ENCODE measurements at regions of chr1 and their contacts with region 1.

Region 1: DNA sequence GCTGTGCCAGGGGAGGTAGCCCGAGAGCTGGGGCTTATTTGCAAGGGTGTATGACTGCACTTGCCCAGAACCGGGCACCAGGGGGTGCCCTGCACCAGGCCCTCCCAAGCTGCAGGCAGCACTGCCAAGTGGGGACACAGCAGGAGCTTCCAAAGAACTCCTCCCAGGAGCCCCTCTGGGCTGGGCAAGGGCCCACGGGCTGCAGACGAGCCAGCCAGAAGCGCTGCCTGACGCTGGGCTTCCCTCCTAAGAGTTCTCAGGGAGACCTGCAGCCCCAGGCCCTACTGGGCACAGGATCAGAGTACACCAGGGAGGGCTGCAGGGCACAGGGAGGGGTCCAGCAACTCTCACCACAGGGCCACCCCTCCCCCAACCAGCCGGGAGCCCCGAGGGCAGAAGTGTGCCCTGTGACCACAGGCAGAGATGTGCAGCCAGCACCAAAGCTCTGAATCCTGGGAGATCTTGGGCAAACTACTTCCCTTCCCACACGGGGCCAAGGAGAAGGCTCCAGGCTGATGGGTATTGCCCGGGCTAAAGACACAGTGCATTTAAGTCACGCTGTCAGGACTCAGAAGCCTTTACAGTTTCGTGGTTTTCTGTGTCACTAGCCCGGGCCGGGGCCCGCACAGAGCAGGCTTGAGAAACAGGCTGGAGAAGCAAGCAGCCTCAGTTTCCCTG is 63.4 kb downstream of the KCNAB2 start:
- DNase-seq: peak in 2 of 9 donors; percentile 29 to 46
- ATAC-seq: peak; percentile 78
- H3K4me3 ChIP-seq: no peak overlapping the region
- H3K4me3 Mint-ChIP-seq: no peak overlapping the region
- H3K27ac ChIP-seq: no peak overlapping the region
- H3K27ac Mint-ChIP-seq: peak overlapping the region in 1 of 9 donors; percentile 13
- H3K4me1 ChIP-seq: no peaks in the 10 kb centered on the region
- H3K4me1 Mint-ChIP-seq: peaks cover 0 to 5% (median 0%) of the 10 kb centered on the region in 7 donors
- H3K27me3 ChIP-seq: no peaks in the 10 kb centered on the region
- H3K27me3 Mint-ChIP-seq: peaks cover 0 to 25% (median 9%) of the 10 kb centered on the region in 5 donors

Region 2: GRCh38 chr1:6185635-6186382 is 76.7 kb after region 1 on chr1:
- CTCF ChIA-PET with region 1: no interaction called
- POLR2A ChIA-PET with region 1: no interaction called
- intact Hi-C with region 1: loop called in 1 of 2 experiments (anchors 2 kb)
- DNase-seq: peak in 1 of 9 donors; percentile 29
- ATAC-seq: no peak
- H3K4me3 ChIP-seq: no peak overlapping the region
- H3K4me3 Mint-ChIP-seq: no peak overlapping the region
- H3K27ac ChIP-seq: no peak overlapping the region
- H3K27ac Mint-ChIP-seq: no peak overlapping the region
- H3K4me1 ChIP-seq: no peaks in the 10 kb centered on the region
- H3K4me1 Mint-ChIP-seq: peaks cover 17 to 36% (median 24%) of the 10 kb centered on the region in 7 donors
- H3K27me3 ChIP-seq: peaks cover 3 to 4% of the 10 kb centered on the region in 2 donors
- H3K27me3 Mint-ChIP-seq: peaks cover 7 to 17% (median 11%) of the 10 kb centered on the region in 5 donors

Measured in naive thymus-derived CD4-positive, alpha-beta T cell (primary cell).